HEK293 (cell line): ENCODE measurements at regions of chr18 and their contacts with region 1.

Region 1: DNA sequence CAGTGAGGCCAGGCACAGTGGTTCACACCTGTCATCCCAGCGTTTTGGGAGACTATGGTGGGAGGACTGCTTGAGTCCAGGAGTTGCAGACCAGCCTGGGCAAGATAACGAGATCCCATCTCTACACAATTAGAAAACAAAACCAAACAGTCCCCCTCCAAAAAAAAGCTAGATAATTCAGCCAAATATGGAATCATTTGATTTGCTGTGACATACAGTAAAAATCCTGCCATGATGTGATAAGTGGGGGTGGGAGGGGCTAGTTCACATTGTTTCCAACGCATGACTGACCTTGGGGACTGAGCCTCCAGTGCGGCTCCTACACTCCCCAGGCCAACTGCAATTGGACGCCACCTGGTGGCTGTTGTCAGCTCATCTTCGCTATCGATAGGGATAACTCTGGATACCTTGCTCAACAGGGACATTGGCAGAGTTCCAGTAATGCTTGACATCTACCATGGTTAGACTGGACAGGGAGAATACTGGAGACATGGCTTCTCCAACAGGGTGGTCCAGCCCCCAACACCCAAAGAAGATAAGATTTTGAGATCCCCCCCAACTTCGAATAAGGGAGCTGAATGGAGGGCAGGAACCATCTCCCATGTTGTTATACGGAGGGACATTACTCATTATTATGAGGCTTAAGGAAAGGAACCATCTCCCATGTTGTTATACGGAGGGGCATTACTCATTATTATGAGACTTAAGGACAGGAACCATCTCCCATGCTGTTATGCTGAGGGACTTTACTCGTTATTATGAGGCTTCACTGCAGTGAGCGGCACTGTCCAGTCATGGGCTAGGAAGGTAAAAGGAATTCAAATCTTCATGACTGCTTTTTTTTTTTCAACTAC is 135.9 kb downstream of the TGIF1 start:
- H3K4me3 ChIP-seq: no peak overlapping the region
- H3K27ac ChIP-seq: no peak overlapping the region
- H3K4me1 ChIP-seq: no peaks in the 10 kb centered on the region; the same call in 1 of the 2 replicates
- CTCF ChIP-seq: peak; percentile 63

Region 2: DNA sequence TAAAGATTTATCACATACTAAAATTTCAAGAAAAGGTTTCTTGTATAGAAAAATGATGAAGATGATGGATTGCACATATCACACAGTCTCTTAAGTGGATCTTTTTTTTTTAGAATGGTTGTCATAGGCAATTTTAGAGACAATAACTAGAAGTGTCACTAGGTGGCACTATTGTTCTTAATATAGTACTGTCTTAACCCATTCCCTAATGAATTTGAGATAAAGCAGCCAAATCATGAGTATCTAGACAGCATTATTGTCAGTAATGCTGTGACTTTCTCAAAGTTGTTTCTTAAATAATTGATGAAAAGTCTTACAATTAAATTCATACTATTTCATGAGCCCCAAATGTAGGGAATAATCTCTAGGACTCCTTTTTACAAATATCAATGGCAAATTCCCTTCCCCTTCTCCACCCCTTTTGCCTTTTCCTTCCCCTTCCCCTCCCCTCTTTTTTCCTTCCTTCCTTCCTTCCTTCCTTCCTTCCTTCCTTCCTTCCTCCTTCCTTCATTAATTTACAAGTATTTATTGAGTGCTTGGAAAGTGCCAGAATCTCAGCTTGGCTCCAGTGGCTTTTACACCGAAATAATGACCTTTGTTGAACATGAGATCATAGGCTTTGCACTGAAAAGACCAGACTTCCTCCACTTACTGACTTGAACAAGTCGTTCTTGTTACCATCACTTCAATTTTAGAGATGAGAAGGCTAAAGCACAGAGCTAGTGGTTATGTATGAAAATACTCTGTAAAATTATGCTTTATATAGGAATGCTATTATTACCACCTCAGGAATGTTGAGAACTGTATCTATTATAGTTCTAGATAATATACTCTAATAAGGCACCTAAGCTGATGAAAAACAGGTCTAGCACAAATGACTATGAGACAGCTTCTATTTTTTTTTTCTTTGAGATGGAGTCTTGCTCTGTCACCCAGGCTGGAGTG is 304.2 kb before region 1 on chr18:
- CTCF ChIA-PET with region 1: interaction called, 24 read pairs
- POLR2A ChIA-PET with region 1: interaction called, 3 read pairs
- H3K4me3 ChIP-seq: no peak overlapping the region
- H3K27ac ChIP-seq: no peak overlapping the region
- H3K4me1 ChIP-seq: no peaks in the 10 kb centered on the region
- CTCF ChIP-seq: peak; percentile 36; the same call in 1 of the 2 replicates

Region 3: GRCh38 chr18:3460823-3461398 is 125.0 kb before region 1 on chr18:
- CTCF ChIA-PET with region 1: interaction called, 10 read pairs
- POLR2A ChIA-PET with region 1: no interaction called
- H3K4me3 ChIP-seq: no peak overlapping the region
- H3K27ac ChIP-seq: no peak overlapping the region
- H3K4me1 ChIP-seq: 0 out of 2 replicates have a peak, but pooled peaks cover 7% of the 10 kb centered on the region
- CTCF ChIP-seq: no peak

Region 4: GRCh38 chr18:3839481-3840075 is 253.7 kb after region 1 on chr18:
- CTCF ChIA-PET with region 1: no interaction called
- POLR2A ChIA-PET with region 1: no interaction called
- H3K4me3 ChIP-seq: no peak overlapping the region
- H3K27ac ChIP-seq: no peak overlapping the region
- H3K4me1 ChIP-seq: no peaks in the 10 kb centered on the region
- CTCF ChIP-seq: no peak